Motor neuron (in vitro differentiated cells): ENCODE measurements at regions of chr6 and their contacts with region 1.

Region 1: DNA sequence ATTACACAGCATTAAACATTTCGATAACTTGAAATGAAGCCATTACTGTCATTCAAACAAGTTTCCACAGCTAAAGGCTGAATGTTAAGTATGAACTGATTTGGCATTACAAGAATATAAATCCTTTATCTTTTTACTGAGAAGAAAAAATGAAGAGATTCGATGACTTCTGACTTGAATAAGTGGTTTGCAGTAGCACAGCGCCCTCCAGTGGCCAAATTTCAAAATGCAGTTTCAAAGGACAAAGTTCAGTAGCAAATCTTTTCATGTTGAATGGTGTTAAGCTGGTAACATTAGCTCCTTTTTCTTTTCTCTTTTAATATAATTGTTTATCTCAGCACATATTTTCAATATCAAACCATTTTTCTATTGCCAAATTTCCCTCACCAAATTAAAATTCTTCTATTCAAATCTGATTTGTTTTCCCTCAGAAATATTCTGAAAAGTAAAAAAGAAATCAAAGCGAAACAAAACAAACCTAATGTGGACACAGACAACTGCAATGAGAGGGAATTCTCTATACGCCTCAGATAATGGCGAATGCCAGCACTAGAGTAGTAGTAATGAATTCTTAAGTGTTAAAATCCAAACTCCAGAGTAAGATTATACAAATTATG is 145.7 kb downstream of the BTBD9 start:
- ATAC-seq: peak; percentile 38 to 60 (median 44)
- H3K4me3 ChIP-seq: no peak overlapping the region
- H3K27ac ChIP-seq: no peak overlapping the region
- H3K4me1 ChIP-seq: peaks cover 16 to 22% of the 10 kb centered on the region in 2 donors

Region 2: GRCh38 chr6:37705239-37706051 is 788.6 kb before region 1 on chr6:
- in situ Hi-C with region 1: loop called in 1 of 9 experiments (anchors 25 kb)
- ATAC-seq: peak; percentile 81 to 88 (median 84)
- H3K4me3 ChIP-seq: peak overlapping the region; percentile 22 to 32 (median 30)
- H3K27ac ChIP-seq: peak overlapping the region; percentile 79 to 82
- H3K4me1 ChIP-seq: peaks cover 24 to 30% of the 10 kb centered on the region in 2 donors

Region 3: DNA sequence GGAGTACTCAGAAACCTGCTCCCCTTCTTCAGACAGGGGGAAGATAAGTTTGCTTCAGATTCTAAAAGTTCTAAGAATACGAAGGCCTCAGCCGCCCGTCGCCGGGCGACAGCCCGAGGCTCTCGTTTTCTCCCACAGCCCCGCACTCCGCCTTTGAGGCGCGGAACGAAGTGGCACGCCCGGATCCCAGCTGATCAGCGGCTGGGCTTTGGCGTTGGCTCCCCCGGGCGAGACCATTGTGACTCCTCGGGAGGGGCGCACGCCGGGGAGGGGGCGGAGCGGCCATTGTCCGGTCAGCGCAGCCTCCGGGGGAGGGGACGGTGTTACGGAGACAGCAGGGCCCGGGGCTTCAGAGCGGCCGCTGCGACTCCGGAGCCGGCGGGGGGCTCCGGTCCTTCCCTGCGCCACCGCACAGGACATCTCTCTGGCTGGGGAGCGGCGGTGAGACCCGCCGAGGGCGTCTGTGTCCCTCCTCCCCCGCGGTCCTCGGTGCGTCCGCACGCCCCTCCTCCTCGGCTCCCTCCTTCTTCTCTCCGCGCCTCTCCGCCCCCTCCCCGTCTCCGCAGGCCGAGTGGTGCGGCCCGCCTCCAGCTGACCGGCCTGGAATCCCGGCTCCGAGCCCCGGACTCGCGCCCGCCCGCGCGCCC is 674.7 kb before region 1 on chr6 and contains the start of gene ZFAND3:
- in situ Hi-C with region 1: loop called in 1 of 9 experiments (anchors 25 kb)
- ATAC-seq: peak; percentile 82 to 89 (median 86)
- H3K4me3 ChIP-seq: peak within 1 kb of the TSS; percentile 62 to 86 (median 66)
- H3K27ac ChIP-seq: peak within 1 kb of the TSS; percentile 99
- H3K4me1 ChIP-seq: peaks cover 18 to 34% of the 10 kb centered on the region in 2 donors
- total RNA-seq, gene ZFAND3: 21.2 to 54.1 (median 39.2) TPM

Region 4: DNA sequence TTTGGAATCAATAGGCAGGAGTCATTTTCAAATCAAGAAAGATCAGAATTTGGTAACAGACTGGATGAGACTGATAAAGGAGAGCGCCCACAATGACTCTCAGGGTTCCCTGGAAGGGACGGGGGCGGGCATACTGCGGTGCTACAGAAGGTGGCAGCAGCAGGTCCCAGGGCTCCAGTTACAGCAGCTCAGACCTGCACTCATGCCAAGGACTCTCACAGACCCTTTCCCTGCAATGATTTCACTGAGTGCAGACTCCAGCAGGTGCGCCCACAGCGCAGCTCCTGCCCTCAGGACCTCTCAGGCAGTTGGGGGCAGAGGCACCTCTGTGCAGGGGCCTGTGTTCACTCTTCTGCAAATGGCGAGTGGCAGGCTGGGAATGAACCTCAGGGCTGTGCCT is 314.7 kb before region 1 on chr6:
- in situ Hi-C with region 1: loop called in 1 of 9 experiments (anchors 25 kb)
- ATAC-seq: no peak
- H3K4me3 ChIP-seq: no peak overlapping the region
- H3K27ac ChIP-seq: no peak overlapping the region
- H3K4me1 ChIP-seq: peaks cover 33 to 42% of the 10 kb centered on the region in 2 donors

Region 5: GRCh38 chr6:38603966-38604365 is 109.9 kb after region 1 on chr6:
- in situ Hi-C with region 1: no loop called
- ATAC-seq: peak in 1 of 8 experiments; percentile 31
- H3K4me3 ChIP-seq: no peak overlapping the region
- H3K27ac ChIP-seq: no peak overlapping the region
- H3K4me1 ChIP-seq: no peaks in the 10 kb centered on the region